ENCODE measurements at regions of chr14 and their contacts with region 1.

Region 1: GRCh38 chr14:34722717-34723545 is 8.5 kb upstream of the CFL2 start:
- DNase-seq: peak in 1 of 2 experiments; percentile 66
- H3K4me3 ChIP-seq: no peak overlapping the region
- H3K27ac ChIP-seq: no peak overlapping the region
- H3K4me1 ChIP-seq: no peaks in the 10 kb centered on the region
- H3K27me3 ChIP-seq: no peaks in the 10 kb centered on the region
- CTCF ChIP-seq: peak in 2 of 3 experiments; percentile 49 to 78; a peak in 3 of 4 replicates
- EP300 ChIP-seq: no peak
- POLR2A ChIP-seq: no peak
- RAD21 ChIP-seq: peak; percentile 48 to 64

Region 2: GRCh38 chr14:34671716-34672115 is 51.2 kb before region 1 on chr14:
- CTCF ChIA-PET with region 1: interaction called, 63 read pairs
- POLR2A ChIA-PET with region 1: no interaction called
- DNase-seq: no peak
- H3K4me3 ChIP-seq: no peak overlapping the region
- H3K27ac ChIP-seq: no peak overlapping the region
- H3K4me1 ChIP-seq: no peaks in the 10 kb centered on the region
- H3K27me3 ChIP-seq: no peaks in the 10 kb centered on the region
- CTCF ChIP-seq: no peak
- EP300 ChIP-seq: no peak
- POLR2A ChIP-seq: no peak
- RAD21 ChIP-seq: no peak

Region 3: GRCh38 chr14:34693228-34693939 is 29.5 kb before region 1 on chr14:
- CTCF ChIA-PET with region 1: interaction called, 15 read pairs
- POLR2A ChIA-PET with region 1: interaction called, 3 read pairs
- DNase-seq: peak; percentile 70
- H3K4me3 ChIP-seq: peak overlapping the region in 1 of 4 experiments; percentile 28; a peak in 2 of 8 replicates
- H3K27ac ChIP-seq: no peak overlapping the region
- H3K4me1 ChIP-seq: peaks cover 0 to 6% (median under 1%) of the 10 kb centered on the region in 4 experiments; a peak in 3 of 7 replicates
- H3K27me3 ChIP-seq: 0 out of 7 replicates have a peak, but pooled peaks cover 0 to 2% (median 0%) of the 10 kb centered on the region in 4 experiments
- CTCF ChIP-seq: no peak
- EP300 ChIP-seq: no peak
- POLR2A ChIP-seq: peak; percentile 86 to 92
- RAD21 ChIP-seq: no peak

Region 4: GRCh38 chr14:34699873-34700621 is 22.9 kb before region 1 on chr14:
- CTCF ChIA-PET with region 1: interaction called, 13 read pairs
- POLR2A ChIA-PET with region 1: no interaction called
- DNase-seq: no peak
- H3K4me3 ChIP-seq: no peak overlapping the region
- H3K27ac ChIP-seq: no peak overlapping the region
- H3K4me1 ChIP-seq: no peaks in the 10 kb centered on the region
- H3K27me3 ChIP-seq: no peaks in the 10 kb centered on the region
- CTCF ChIP-seq: no peak
- EP300 ChIP-seq: no peak
- POLR2A ChIP-seq: no peak
- RAD21 ChIP-seq: no peak

Region 5: GRCh38 chr14:34733235-34733634 is 10.3 kb after region 1 on chr14:
- CTCF ChIA-PET with region 1: interaction called, 37 read pairs
- POLR2A ChIA-PET with region 1: interaction called, 4 read pairs
- DNase-seq: no peak
- H3K4me3 ChIP-seq: no peak overlapping the region
- H3K27ac ChIP-seq: no peak overlapping the region
- H3K4me1 ChIP-seq: no peaks in the 10 kb centered on the region
- H3K27me3 ChIP-seq: no peaks in the 10 kb centered on the region
- CTCF ChIP-seq: no peak
- EP300 ChIP-seq: no peak
- POLR2A ChIP-seq: no peak
- RAD21 ChIP-seq: no peak

Region 6: DNA sequence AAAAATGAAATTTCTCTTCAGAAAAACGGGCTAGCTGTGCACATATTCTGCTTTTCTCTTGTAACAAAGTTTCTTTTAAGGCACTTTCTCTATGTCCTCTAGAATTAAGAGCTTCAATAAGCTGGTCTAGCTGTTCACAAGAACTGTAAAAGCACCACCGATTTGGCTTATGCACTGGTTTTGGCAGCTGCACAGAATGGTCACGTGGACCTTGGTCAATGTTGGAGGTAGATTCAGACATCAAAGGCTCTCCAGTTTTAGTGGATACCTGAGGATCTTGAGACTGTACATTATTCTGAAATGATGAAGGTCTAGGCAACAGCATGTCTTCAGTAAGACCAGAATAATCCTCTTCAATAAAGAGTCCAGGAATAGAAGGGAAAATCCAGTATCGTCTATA is 53.0 kb after region 1 on chr14:
- CTCF ChIA-PET with region 1: no interaction called
- POLR2A ChIA-PET with region 1: no interaction called
- DNase-seq: no peak
- H3K4me3 ChIP-seq: no peak overlapping the region
- H3K27ac ChIP-seq: no peak overlapping the region
- H3K4me1 ChIP-seq: no peaks in the 10 kb centered on the region
- H3K27me3 ChIP-seq: no peaks in the 10 kb centered on the region
- CTCF ChIP-seq: no peak
- EP300 ChIP-seq: no peak
- POLR2A ChIP-seq: no peak
- RAD21 ChIP-seq: no peak

Region 7: GRCh38 chr14:34875031-34875922 is 152.3 kb after region 1 on chr14 and contains the start of gene BAZ1A:
- CTCF ChIA-PET with region 1: no interaction called
- POLR2A ChIA-PET with region 1: no interaction called
- DNase-seq: no peak
- H3K4me3 ChIP-seq: peak within 1 kb of the TSS; percentile 72 to 85 (median 77)
- H3K27ac ChIP-seq: peak within 1 kb of the TSS; percentile 45; the same call in 1 of the 2 replicates
- H3K4me1 ChIP-seq: peaks cover 0 to 4% (median under 1%) of the 10 kb centered on the region in 4 experiments; a peak in 2 of 7 replicates
- H3K27me3 ChIP-seq: no peaks in the 10 kb centered on the region
- CTCF ChIP-seq: no peak
- EP300 ChIP-seq: no peak
- POLR2A ChIP-seq: peak in 1 of 2 experiments; percentile 65; a peak in 2 of 3 replicates
- RAD21 ChIP-seq: no peak
- total RNA-seq, gene BAZ1A: 20.9 and 23.1 TPM in 2 replicates